ENCODE measurements at regions of chr6 and their contacts with region 1.

Region 1: DNA sequence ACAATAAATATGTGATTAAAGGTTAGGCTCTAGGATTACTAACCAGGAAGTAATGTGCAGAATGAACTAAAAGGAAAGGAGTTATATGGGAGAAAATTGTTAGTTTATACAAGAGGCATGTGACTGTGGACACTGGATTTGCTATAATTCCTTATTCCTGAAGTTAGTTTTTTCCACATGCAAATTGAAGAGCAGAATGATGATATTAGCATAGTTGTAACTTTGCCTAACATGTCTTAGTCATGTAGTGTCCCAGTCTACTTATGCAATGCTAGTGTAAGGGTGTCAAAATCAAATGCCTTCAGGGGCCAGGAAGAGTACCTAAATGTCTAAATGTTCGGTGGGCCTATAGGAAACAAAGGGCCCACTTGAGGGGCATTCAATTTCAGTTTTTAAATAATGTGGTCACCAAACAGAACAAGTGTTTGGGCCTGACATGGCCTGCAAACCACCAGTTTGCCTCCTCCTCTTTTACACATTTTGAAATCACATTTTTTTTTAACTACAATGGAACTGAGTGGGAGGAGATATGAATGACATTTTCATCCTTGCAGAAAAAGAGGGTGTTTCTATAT is 28.0 kb upstream of the CEP85L start:
- DNase-seq: no peak
- H3K4me3 Mint-ChIP-seq: no peak overlapping the region
- H3K27ac Mint-ChIP-seq: peak overlapping the region; percentile 80
- H3K4me1 Mint-ChIP-seq: peaks cover 33% of the 10 kb centered on the region
- H3K27me3 Mint-ChIP-seq: no peaks in the 10 kb centered on the region

Region 2: DNA sequence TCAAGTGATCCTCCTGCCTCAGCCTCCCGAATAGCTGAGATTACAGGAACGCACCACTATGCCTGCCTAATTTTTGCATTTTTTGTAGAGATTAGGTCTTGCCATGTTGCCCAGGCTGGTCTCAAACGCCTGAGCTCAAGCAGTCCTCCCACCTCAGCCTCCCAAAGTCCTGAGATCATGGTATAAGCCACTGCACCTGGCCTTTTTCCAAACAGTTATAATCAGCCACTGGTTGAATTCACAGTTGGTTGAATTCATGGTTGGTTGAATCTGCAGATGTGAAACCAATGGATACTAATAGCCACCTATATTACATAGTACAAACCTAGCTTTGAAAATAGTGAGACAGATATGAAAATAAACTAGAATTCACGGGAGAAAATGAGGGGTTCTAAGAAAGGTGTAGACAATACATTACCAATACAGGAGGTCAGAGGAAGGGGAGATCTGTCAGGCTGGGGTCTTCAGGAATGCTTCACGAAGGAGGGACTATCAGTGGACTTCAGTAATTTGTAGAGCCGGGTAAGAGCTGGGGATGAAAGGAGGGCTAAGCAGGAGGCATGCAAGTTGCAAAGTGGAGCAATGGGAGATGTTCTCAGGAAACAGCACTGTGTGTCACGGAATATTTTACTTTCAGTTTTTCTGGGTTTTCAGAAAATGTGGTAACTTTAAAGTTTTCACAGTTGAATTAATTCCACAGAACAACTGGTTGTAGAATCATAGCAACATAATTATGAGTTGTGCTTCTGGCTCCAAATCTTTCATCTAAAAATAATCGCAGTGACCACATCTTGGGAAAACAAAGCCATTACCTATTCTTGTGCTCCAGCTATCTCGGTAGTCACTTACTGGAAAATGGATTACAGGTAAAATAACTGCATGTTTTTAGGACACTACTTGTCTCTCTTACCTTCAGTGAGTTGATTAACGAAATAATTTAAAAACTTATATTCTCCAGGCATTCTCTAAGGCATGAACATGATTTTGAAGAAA is 15.1 kb before region 1 on chr6:
- intact Hi-C with region 1: loop called (anchors 1 kb)
- DNase-seq: peak; percentile 73
- H3K4me3 Mint-ChIP-seq: peak overlapping the region; percentile 83
- H3K27ac Mint-ChIP-seq: peak overlapping the region; percentile 95
- H3K4me1 Mint-ChIP-seq: peaks cover 54% of the 10 kb centered on the region
- H3K27me3 Mint-ChIP-seq: no peaks in the 10 kb centered on the region

Region 3: DNA sequence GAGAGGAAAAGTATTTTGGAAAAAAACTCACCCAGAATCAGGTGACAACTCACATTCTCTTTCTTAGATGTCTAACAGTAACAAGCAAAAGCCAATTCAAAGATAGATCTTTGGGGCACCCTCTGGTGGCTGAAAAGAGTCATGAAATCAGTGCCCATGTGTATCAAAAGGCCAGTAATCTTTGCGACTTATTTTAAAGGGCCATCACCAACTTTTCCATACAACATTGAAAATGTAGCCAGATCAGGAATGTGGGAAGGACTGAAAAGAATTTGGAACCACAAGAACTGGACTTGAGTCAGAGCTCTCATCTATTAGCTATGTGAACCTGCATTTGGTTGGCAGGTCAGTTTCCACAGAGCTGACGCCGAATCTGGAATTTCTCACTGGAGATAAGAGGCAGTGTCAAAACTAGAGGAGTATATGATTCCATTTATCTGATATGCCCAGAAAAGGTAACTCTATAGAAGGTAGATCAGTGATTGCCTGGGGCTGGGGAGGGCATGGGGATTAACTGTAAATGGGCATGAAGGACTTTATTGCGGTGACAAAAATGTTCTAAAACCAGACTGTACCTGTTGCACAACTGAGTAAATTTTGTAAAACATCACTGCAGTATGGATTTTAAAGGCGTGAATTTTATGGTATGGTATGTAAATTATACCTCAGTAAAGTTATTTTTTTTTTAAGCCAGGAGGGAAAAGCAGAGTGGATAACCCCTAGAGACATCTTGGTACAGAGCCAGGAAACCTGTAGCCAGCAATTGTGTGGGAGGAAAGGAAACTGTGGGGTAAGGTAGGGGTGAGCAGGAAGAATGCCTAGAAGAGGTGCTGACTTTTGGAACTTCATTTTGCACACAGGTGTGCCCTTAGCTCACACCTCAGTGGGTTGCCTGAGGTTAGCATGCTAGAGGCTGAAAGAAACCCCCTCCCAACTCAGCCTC is 97.5 kb after region 1 on chr6:
- intact Hi-C with region 1: loop called (anchors 1 kb)
- DNase-seq: peak; percentile 91
- H3K4me3 Mint-ChIP-seq: peak overlapping the region; percentile 35
- H3K27ac Mint-ChIP-seq: peak overlapping the region; percentile 59
- H3K4me1 Mint-ChIP-seq: peaks cover 15% of the 10 kb centered on the region
- H3K27me3 Mint-ChIP-seq: peaks cover 10% of the 10 kb centered on the region